Esophagus muscularis mucosa (tissue), 4 donors: ENCODE measurements at regions of chr12 and their contacts with region 1.

Region 1: GRCh38 chr12:108514973-108515814 is at the start of gene FICD:
- DNase-seq: peak; percentile 100
- H3K4me3 ChIP-seq: peak within 1 kb of the TSS; percentile 74 to 94 (median 86)
- H3K27ac ChIP-seq: peak within 1 kb of the TSS; percentile 74 to 84 (median 78)
- H3K4me1 ChIP-seq: peaks cover 13 to 37% (median 26%) of the 10 kb centered on the region in 4 donors
- H3K27me3 ChIP-seq: no peaks in the 10 kb centered on the region
- CTCF ChIP-seq: no peak
- EP300 ChIP-seq: no peak
- POLR2A ChIP-seq: no peak
- total RNA-seq, gene FICD: 5.6 to 7.2 (median 6.5) TPM

Region 2: GRCh38 chr12:107992870-107993451 is 522.2 kb before region 1 on chr12:
- intact Hi-C with region 1: loop called (anchors 5 kb)
- DNase-seq: peak; percentile 47
- H3K4me3 ChIP-seq: no peak overlapping the region
- H3K27ac ChIP-seq: no peak overlapping the region
- H3K4me1 ChIP-seq: no peaks in the 10 kb centered on the region
- H3K27me3 ChIP-seq: no peaks in the 10 kb centered on the region
- CTCF ChIP-seq: peak in 2 of 3 experiments; percentile 10 to 39
- EP300 ChIP-seq: no peak
- POLR2A ChIP-seq: no peak

Region 3: DNA sequence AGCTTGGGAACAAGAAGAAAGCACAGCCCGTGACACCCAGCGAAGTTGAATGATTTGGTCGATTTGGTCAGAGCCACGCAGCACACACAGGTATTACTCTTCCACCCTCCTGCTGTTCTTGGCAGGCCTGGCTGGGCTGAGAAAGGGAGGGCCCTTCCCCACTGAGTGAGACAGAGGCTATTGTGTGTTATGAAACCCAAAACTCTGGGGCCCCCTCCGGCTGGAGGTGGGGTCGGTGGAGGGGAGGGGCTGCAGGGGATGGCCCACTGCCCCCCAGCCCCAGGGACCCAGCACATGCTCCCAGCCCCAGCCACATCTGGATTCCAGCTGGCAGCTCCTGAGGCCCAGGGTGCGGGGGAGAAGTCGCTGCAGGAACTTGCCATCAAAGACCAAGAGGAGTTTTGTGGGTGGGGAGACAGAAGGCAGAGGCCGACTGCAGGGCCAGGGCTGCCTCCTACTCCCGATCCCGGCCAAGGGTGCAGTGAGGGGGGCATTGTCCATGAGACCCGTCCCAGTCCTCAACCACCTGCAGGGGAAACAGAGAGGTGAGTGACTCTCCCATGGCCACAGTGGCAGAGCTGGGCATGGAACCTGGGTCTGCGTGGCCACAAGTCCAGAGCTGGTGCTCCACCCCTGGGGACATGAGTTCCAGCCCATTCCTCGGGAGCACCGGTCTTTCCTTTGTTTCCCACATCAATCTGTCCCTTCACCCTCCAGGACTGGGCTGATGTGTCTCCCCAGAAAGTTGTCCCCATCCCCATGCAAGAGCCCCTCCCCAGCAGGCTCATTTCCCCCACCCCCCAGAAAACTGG is 74.0 kb after region 1 on chr12:
- intact Hi-C with region 1: no loop called
- DNase-seq: no peak
- H3K4me3 ChIP-seq: no peak overlapping the region
- H3K27ac ChIP-seq: no peak overlapping the region
- H3K4me1 ChIP-seq: peaks cover 0 to 3% (median 0%) of the 10 kb centered on the region in 4 donors
- H3K27me3 ChIP-seq: peaks cover 0 to 17% (median 0%) of the 10 kb centered on the region in 4 donors
- CTCF ChIP-seq: no peak
- EP300 ChIP-seq: no peak
- POLR2A ChIP-seq: no peak